ENCODE measurements at regions of chr12 and their contacts with region 1.

Region 1: GRCh38 chr12:120640840-120641833 is 711 bp downstream of the CABP1 start:
- DNase-seq: peak in 1 of 2 donors; percentile 20
- ATAC-seq: peak; percentile 70 to 71
- H3K4me3 ChIP-seq: peak overlapping the region; percentile 35 to 67 (median 50)
- H3K27ac ChIP-seq: no peak overlapping the region
- H3K4me1 ChIP-seq: peaks cover 3 to 5% of the 10 kb centered on the region in 2 donors
- H3K27me3 ChIP-seq: peaks cover 31 to 48% (median 41%) of the 10 kb centered on the region in 3 donors
- CTCF ChIP-seq: no peak
- POLR2A ChIP-seq: no peak

Region 2: DNA sequence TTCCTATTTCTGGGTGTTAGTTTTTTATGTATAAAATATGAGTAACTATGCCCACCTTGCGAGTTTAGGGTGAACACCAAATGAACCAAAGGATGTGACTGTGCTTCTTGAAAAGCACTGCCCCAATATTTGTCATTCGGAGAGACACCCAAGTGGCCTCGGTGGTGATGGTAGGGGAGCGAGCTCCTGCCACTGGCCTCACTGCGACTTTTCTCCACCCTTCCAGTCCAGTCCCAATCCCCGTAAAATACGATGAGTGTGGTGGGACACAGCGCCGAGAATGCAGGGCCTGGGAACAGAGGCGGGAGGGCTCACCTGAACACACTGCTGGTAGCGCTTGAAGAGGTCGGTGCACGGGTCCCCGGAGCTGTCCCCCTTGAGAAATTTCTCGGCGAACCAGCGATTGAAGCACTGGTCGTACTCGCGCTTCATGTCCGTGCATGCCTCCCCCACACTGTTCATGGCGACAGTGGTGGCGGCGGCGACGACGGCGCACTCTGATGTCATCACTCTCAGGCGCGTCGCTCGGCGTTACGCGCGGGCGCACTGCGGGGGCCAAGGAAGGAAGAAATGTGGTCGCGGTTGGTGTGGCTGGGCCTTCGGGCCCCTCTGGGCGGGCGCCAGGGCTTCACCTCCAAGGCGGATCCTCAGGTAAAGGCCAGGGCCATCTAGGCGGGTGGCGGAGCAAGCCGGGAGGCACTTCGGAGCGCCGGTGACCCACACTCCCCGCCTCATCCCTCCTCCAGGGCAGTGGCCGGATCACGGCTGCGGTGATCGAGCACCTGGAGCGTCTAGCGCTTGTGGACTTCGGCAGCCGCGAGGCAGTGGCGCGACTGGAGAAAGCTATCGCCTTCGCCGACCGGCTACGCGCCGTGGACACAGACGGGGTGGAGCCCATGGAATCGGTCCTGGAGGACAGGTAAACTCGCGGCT is 195.0 kb before region 1 on chr12 and contains the starts of genes GATC and TRIAP1:
- in situ Hi-C with region 1: no loop called
- intact Hi-C with region 1: loop called (anchors 10 kb)
- DNase-seq: peak; percentile 57 to 75
- ATAC-seq: peak; percentile 96 to 97
- H3K4me3 ChIP-seq: peak within 1 kb of the TSS; percentile 85 to 96 (median 94)
- H3K27ac ChIP-seq: peak within 1 kb of the TSS; percentile 82 to 96 (median 88)
- H3K4me1 ChIP-seq: peaks cover 19 to 20% of the 10 kb centered on the region in 2 donors
- H3K27me3 ChIP-seq: no peaks in the 10 kb centered on the region
- CTCF ChIP-seq: peak in 1 of 5 experiments; percentile 39
- POLR2A ChIP-seq: peak; percentile 50 to 73
- total RNA-seq, gene GATC: 14.5 to 20.7 (median 18.4) TPM
- total RNA-seq, gene TRIAP1: 14.4 to 33.7 (median 28.0) TPM

Region 3: DNA sequence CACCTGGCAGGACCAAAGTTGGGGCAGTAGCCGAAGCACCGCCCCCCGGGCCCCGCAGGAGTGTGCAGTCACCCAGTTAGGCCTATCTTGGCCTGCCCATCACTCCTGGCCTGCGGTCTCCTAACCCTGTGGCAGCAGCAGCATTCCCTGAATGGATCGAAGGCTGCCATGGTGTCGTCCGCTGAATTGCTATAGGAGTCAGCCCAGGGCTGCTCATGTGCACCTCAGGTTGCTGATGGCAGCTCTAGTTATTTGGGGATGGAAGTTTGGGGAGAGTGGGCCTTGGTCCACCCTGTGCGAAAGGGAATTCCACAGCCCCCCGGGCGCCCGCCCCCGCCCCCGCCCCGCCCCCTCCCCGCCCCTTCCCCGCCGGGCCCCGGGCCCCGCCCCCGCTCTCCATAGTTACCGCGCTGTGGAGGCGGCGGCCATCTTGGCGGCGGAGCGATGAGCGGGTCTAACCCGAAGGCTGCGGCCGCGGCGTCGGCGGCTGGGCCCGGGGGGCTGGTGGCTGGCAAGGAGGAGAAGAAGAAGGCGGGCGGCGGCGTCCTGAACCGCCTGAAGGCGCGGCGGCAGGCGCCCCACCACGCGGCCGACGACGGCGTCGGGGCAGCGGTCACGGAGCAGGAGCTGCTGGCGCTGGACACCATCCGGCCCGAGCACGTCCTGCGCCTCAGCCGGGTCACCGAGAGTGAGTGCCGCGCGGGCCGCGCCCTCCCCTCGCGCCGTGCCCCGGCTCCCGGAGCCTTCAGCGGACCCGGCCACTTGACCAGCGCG is 69.1 kb after region 1 on chr12 and contains the start of gene UNC119B:
- in situ Hi-C with region 1: loop called (anchors 5 kb)
- intact Hi-C with region 1: no loop called
- DNase-seq: peak in 1 of 2 donors; percentile 42
- ATAC-seq: peak; percentile 79 to 81
- H3K4me3 ChIP-seq: peak within 1 kb of the TSS; percentile 63 to 87 (median 74)
- H3K27ac ChIP-seq: peak within 1 kb of the TSS; percentile 69 to 94 (median 85)
- H3K4me1 ChIP-seq: peaks cover 19 to 25% of the 10 kb centered on the region in 2 donors
- H3K27me3 ChIP-seq: no peaks in the 10 kb centered on the region
- CTCF ChIP-seq: peak in 1 of 5 experiments; percentile 24
- POLR2A ChIP-seq: peak; percentile 20 to 41
- total RNA-seq, gene UNC119B: 4.7 to 8.7 (median 7.8) TPM

Region 4: DNA sequence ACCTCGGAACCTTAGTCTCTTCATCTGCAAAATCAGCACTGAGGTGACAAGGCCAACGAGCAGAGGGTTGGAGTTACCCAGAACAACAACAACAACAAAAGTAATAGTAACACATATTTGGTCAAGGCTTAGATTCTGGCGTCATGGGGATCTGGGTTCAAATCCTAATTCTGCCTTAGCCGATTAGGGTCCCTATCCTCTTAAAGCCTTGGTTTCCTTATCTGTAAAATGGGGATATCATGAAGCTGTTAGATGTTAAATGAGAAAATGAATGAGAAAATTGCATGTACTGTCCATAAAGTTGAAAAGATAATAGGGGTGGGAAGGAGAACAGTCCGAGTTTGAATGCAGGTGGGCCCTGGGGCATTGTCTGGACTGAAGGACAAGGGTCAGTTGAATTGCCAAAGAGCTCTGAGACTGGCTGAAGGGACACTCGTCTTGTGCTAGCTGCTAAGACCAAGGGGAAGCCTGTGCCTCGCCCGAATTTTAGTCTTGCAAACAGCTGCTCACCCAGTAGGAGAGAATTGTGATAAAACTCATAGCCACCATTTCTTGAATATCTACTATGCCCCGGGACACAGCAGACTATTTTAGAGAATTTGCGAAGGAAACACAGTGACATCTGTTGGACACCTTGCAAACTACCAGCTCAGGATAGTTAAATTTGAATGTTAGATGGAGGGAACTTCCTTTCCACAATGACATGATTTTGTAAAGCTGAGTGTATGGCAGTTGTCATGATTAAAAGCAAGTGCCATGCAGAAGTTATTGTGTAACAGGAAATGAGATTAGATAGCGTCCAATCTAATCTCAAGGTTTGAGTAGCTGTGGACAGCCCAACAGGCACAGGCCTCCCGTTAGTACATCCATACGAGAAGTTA is 330.4 kb after region 1 on chr12:
- in situ Hi-C with region 1: loop called (anchors 5 to 10 kb)
- intact Hi-C with region 1: no loop called
- DNase-seq: no peak
- ATAC-seq: peak; percentile 68 to 95
- H3K4me3 ChIP-seq: no peak overlapping the region
- H3K27ac ChIP-seq: no peak overlapping the region
- H3K4me1 ChIP-seq: no peaks in the 10 kb centered on the region
- H3K27me3 ChIP-seq: no peaks in the 10 kb centered on the region
- CTCF ChIP-seq: peak; percentile 65 to 75 (median 68)
- POLR2A ChIP-seq: no peak

Region 5: GRCh38 chr12:121095544-121096198 is 454.5 kb after region 1 on chr12:
- in situ Hi-C with region 1: loop called in 1 of 4 experiments (anchors 25 kb)
- intact Hi-C with region 1: loop called (anchors 10 kb)
- DNase-seq: peak; percentile 19 to 25
- ATAC-seq: peak; percentile 47 to 80
- H3K4me3 ChIP-seq: peak overlapping the region; percentile 1 to 47 (median 34)
- H3K27ac ChIP-seq: no peak overlapping the region
- H3K4me1 ChIP-seq: peaks cover 5 to 9% of the 10 kb centered on the region in 2 donors
- H3K27me3 ChIP-seq: peaks cover 0 to 10% (median 6%) of the 10 kb centered on the region in 3 donors
- CTCF ChIP-seq: peak; percentile 31 to 83 (median 65)
- POLR2A ChIP-seq: no peak

Region 6: DNA sequence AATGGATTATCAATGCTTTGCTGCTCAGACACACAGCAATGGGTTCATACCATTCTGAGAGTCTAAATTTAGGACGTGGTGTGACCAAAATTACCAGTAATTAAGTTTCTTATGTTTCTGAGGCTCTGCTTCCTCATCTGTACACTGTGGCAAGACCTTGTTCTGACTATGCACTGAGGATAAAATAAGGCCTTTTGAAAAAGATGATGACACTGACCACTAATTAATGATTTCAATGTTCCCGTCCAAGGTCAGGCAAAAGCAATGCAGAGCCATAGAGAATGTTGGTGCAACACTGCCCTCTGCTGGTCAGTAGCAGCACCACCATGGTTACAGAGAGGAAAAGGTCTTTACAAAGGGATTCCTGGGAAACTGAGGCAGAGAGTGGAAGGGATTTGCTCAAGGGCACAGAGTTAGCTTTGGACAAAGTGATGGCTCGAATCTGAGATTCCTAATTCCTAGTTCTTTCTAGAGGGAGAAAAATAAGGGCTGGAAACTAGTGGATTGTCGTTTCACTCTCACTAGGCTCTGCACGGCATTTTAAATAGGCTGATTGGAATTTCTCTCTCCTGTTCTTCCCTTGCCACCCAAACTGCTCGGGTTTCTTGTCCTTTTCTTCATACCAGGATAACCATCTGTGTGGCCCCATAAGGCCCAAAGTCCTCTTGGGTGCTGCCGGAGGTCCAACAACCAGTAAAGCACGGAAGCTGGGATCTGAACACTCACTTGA is 469.2 kb after region 1 on chr12:
- in situ Hi-C with region 1: loop called in 1 of 4 experiments (anchors 25 kb)
- intact Hi-C with region 1: no loop called
- DNase-seq: peak; percentile 24 to 26
- ATAC-seq: peak; percentile 56 to 77
- H3K4me3 ChIP-seq: no peak overlapping the region
- H3K27ac ChIP-seq: no peak overlapping the region
- H3K4me1 ChIP-seq: no peaks in the 10 kb centered on the region
- H3K27me3 ChIP-seq: no peaks in the 10 kb centered on the region
- CTCF ChIP-seq: peak; percentile 72 to 91 (median 81)
- POLR2A ChIP-seq: no peak